ENCODE measurements at regions of chr3 and their contacts with region 1.

Region 1: DNA sequence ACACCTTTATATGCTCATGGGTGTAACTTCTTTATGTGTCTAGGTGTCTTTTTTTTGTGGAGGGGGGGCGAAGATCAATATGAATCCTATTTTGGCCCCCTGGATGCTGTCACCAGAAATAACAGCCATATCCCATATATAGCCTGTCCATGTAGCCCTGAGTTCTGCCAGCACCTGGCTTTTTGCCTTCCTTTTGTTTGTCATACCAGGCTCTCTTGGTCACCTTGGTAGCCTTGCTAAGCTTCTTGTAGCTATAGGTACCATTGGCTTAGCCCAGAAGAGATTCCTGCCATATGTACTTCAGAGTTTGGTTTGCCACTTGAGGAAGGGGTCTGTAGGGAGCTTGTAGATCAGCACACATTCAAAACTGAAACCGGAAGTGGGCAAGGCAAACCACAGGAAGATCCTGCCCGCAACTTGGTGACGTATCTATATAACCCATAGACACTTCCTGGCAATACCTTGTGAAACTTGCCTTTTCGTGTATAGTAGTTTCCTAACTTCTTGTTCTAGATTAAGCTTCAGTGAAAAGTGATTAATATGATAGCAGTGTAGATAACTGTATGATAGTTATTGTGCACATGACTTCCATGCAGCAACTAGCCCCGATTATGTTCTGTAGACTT is 11.9 kb downstream of the RASA2 start:
- DNase-seq: peak; percentile 66 to 98 (median 86)
- ATAC-seq: peak; percentile 82
- H3K4me3 ChIP-seq: peak overlapping the region; percentile 31 to 44
- H3K4me3 Mint-ChIP-seq: peak overlapping the region; percentile 76
- H3K27ac ChIP-seq: peak overlapping the region; percentile 73 to 96
- H3K27ac Mint-ChIP-seq: peak overlapping the region; percentile 94
- H3K4me1 ChIP-seq: peaks cover 82% of the 10 kb centered on the region
- H3K4me1 Mint-ChIP-seq: peaks cover 68% of the 10 kb centered on the region
- H3K27me3 ChIP-seq: no peaks in the 10 kb centered on the region
- H3K27me3 Mint-ChIP-seq: no peaks in the 10 kb centered on the region
- CTCF ChIP-seq: no peak

Region 2: GRCh38 chr3:141477224-141477623 is 21.5 kb before region 1 on chr3:
- CTCF ChIA-PET with region 1: interaction called, 11 read pairs
- POLR2A ChIA-PET with region 1: interaction called, 3 read pairs
- intact Hi-C with region 1: loop called in 1 of 2 experiments (anchors 1 kb)
- DNase-seq: no peak
- ATAC-seq: no peak
- H3K4me3 ChIP-seq: no peak overlapping the region
- H3K4me3 Mint-ChIP-seq: no peak overlapping the region
- H3K27ac ChIP-seq: no peak overlapping the region
- H3K27ac Mint-ChIP-seq: no peak overlapping the region
- H3K4me1 ChIP-seq: peaks cover 34% of the 10 kb centered on the region
- H3K4me1 Mint-ChIP-seq: peaks cover 44% of the 10 kb centered on the region
- H3K27me3 ChIP-seq: no peaks in the 10 kb centered on the region
- H3K27me3 Mint-ChIP-seq: no peaks in the 10 kb centered on the region
- CTCF ChIP-seq: no peak

Region 3: GRCh38 chr3:141514382-141514781 is 15.7 kb after region 1 on chr3:
- CTCF ChIA-PET with region 1: interaction called, 4 read pairs
- POLR2A ChIA-PET with region 1: interaction called, 7 read pairs
- intact Hi-C with region 1: loop called in 1 of 2 experiments (anchors 1 kb)
- DNase-seq: no peak
- ATAC-seq: no peak
- H3K4me3 ChIP-seq: no peak overlapping the region
- H3K4me3 Mint-ChIP-seq: no peak overlapping the region
- H3K27ac ChIP-seq: no peak overlapping the region
- H3K27ac Mint-ChIP-seq: peak overlapping the region; percentile 11
- H3K4me1 ChIP-seq: peaks cover 35% of the 10 kb centered on the region
- H3K4me1 Mint-ChIP-seq: peaks cover 61% of the 10 kb centered on the region
- H3K27me3 ChIP-seq: no peaks in the 10 kb centered on the region
- H3K27me3 Mint-ChIP-seq: no peaks in the 10 kb centered on the region
- CTCF ChIP-seq: no peak

Region 4: DNA sequence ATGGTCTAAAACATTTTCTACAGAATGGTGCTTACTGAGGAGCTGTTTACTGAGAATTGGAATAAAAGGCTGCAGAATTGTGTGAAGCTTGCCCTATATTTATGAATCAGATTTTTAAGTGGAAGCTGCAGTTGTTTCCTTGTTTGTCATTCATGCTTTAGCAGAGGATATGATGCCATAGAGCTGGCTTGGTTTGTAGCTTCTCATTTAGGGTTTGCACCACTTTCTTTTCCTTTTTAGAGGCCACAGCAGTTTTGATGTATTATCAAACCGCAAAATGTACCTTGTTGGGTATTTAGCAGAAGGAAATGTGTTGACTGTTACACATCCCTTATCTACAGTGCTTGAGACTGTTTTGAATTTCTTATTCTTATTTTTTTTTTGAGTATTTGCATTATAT is 54.3 kb after region 1 on chr3:
- CTCF ChIA-PET with region 1: no interaction called
- POLR2A ChIA-PET with region 1: interaction called, 8 read pairs
- intact Hi-C with region 1: loop called in 1 of 2 experiments (anchors 2 kb)
- DNase-seq: peak in 4 of 9 experiments; percentile 21 to 80 (median 48)
- ATAC-seq: peak; percentile 89
- H3K4me3 ChIP-seq: no peak overlapping the region
- H3K4me3 Mint-ChIP-seq: peak overlapping the region; percentile 65
- H3K27ac ChIP-seq: peak overlapping the region; percentile 15 to 45
- H3K27ac Mint-ChIP-seq: peak overlapping the region; percentile 83
- H3K4me1 ChIP-seq: peaks cover 68% of the 10 kb centered on the region
- H3K4me1 Mint-ChIP-seq: peaks cover 64% of the 10 kb centered on the region
- H3K27me3 ChIP-seq: no peaks in the 10 kb centered on the region
- H3K27me3 Mint-ChIP-seq: no peaks in the 10 kb centered on the region
- CTCF ChIP-seq: no peak